PC-9 (cell line): ENCODE measurements at regions of chr15 and their contacts with region 1.

Region 1: GRCh38 chr15:66877477-66878271 is 175.6 kb downstream of the SMAD6 start:
- DNase-seq: no peak
- H3K4me3 ChIP-seq: no peak overlapping the region
- H3K27ac ChIP-seq: no peak overlapping the region
- H3K4me1 ChIP-seq: peaks cover 9% of the 10 kb centered on the region
- H3K27me3 ChIP-seq: no peaks in the 10 kb centered on the region
- CTCF ChIP-seq: no peak

Region 2: DNA sequence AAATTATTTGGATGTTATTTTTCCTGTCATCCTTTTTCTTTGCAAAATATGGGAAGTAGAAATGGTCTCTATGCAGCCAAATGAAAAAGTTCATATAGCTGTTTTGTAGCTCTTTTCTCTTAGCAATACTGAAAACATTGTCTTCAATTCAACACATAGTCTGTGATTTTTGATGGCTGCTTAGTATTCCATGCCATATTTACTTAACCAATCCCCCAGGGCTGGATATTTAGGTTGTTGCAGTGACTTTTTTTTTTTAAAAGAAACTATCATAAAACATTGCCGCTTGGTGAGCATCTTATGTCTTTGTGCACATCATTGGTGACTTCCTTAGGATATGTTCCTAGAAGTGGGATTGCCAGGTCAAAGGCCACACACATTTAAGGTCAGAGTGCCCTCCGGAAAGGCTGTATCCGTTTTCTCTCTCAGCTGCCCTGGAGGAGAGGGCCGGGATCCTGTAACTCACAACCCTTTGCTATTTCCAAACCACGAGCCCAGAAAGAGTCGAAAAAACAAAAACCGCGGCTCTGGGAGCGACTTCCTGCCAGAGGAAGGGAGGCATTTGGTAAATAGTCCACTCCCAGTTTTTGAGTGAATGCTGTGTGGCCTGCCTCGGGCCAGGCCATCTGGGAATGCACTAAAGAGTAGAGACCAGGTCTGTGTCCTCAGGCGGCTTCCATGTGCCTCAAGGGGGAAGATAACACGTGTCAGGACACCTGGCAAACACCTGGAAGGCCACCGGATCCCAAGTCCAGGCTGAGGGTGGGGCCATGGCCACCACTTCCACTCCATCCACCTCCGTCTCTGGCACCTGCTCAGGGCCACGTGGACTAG is 133.8 kb before region 1 on chr15:
- CTCF ChIA-PET with region 1: no interaction called
- POLR2A ChIA-PET with region 1: interaction called, 10 read pairs
- intact Hi-C with region 1: no loop called
- DNase-seq: no peak
- H3K4me3 ChIP-seq: no peak overlapping the region
- H3K27ac ChIP-seq: no peak overlapping the region
- H3K4me1 ChIP-seq: peaks cover 23% of the 10 kb centered on the region
- H3K27me3 ChIP-seq: no peaks in the 10 kb centered on the region
- CTCF ChIP-seq: no peak